ENCODE measurements at regions of chr22 and their contacts with region 1.

Region 1: GRCh38 chr22:36301384-36301828 is 48.5 kb downstream of the APOL1 start:
- DNase-seq: peak; percentile 88
- H3K4me3 ChIP-seq: no peak overlapping the region; a peak in 1 of 4 replicates
- H3K27ac ChIP-seq: peak overlapping the region in 1 of 2 experiments; percentile 4; a peak in 1 of 4 replicates
- H3K4me1 ChIP-seq: no peaks in the 10 kb centered on the region
- H3K27me3 ChIP-seq: no peaks in the 10 kb centered on the region
- CTCF ChIP-seq: peak; percentile 95
- EP300 ChIP-seq: no peak
- RAD21 ChIP-seq: peak; percentile 92

Region 2: DNA sequence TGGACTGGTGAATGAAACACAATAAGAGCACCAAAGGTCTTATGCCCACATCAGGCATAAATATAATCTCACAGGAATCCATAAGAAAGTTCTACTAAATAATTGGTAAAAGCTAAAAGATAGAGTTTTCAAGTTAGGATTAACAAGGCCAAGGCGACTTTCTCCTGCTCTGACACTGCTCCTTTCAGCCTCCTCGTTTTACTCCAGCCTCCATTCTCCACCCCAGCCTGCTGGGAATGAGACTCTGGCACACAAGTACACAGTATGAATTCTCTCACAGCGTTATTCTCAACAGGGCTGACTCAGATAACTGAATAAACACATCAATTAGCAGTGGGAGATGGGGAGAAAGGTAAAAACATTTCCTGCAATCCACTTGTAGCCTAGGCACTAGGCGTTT is 488.8 kb before region 1 on chr22:
- CTCF ChIA-PET with region 1: no interaction called
- POLR2A ChIA-PET with region 1: no interaction called
- DNase-seq: no peak
- H3K4me3 ChIP-seq: no peak overlapping the region
- H3K27ac ChIP-seq: no peak overlapping the region; a peak in 1 of 4 replicates
- H3K4me1 ChIP-seq: peaks cover 0 to 11% of the 10 kb centered on the region in 2 experiments; a peak in 2 of 4 replicates
- H3K27me3 ChIP-seq: no peaks in the 10 kb centered on the region
- CTCF ChIP-seq: no peak
- EP300 ChIP-seq: no peak
- RAD21 ChIP-seq: no peak

Region 3: DNA sequence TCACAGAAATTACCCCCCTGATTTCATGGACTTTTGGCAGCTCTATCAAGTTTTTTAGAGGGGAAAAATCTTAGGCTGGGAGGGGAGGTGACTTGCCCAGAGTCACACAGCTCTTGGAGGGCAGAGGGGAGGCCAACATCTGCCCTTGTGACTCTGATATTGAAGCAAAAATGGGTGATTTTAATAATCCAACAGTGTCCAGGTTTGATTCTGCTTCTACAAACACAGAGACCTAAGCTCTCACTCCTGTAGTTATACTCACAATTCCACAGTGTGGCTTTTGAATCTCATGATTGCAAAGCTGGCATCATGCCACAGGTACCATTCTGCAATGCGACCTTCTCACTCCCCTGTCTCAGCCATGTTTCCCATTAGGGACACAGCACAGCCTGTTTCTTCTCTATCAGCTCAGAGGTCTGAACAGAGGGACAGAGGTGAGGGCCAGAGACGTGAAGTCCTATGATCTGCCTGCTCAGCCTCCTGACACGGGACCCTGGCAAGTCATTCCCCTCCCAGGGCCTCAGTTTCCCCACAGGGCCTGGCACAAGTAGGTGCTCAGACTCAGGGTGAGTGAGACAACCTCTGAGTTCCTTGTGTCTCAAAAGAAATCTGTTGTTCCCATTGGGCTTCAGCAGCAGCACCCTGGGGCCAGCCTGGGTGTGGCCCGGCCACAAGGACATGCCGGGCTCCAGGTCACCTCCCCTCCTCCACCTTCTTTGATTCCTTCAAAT is 62.9 kb before region 1 on chr22:
- CTCF ChIA-PET with region 1: no interaction called
- POLR2A ChIA-PET with region 1: no interaction called
- DNase-seq: peak; percentile 36
- H3K4me3 ChIP-seq: peak overlapping the region; percentile 61 to 79
- H3K27ac ChIP-seq: peak overlapping the region; percentile 79 to 91
- H3K4me1 ChIP-seq: peaks cover 10 to 25% of the 10 kb centered on the region in 2 experiments; a peak in 1 of 4 replicates
- H3K27me3 ChIP-seq: no peaks in the 10 kb centered on the region
- CTCF ChIP-seq: no peak
- EP300 ChIP-seq: no peak
- RAD21 ChIP-seq: no peak

Region 4: GRCh38 chr22:36277482-36278291 is 23.7 kb before region 1 on chr22:
- CTCF ChIA-PET with region 1: interaction called, 113 read pairs
- POLR2A ChIA-PET with region 1: no interaction called
- DNase-seq: peak; percentile 84
- H3K4me3 ChIP-seq: no peak overlapping the region
- H3K27ac ChIP-seq: no peak overlapping the region
- H3K4me1 ChIP-seq: no peaks in the 10 kb centered on the region; a peak in 1 of 4 replicates
- H3K27me3 ChIP-seq: no peaks in the 10 kb centered on the region
- CTCF ChIP-seq: peak; percentile 70
- EP300 ChIP-seq: no peak
- RAD21 ChIP-seq: peak; percentile 74

Region 5: GRCh38 chr22:36311386-36312358 is 10.3 kb after region 1 on chr22:
- CTCF ChIA-PET with region 1: interaction called, 48 read pairs
- POLR2A ChIA-PET with region 1: no interaction called
- DNase-seq: no peak
- H3K4me3 ChIP-seq: no peak overlapping the region
- H3K27ac ChIP-seq: peak overlapping the region in 1 of 2 experiments; percentile 33; a peak in 1 of 4 replicates
- H3K4me1 ChIP-seq: no peaks in the 10 kb centered on the region
- H3K27me3 ChIP-seq: no peaks in the 10 kb centered on the region
- CTCF ChIP-seq: no peak
- EP300 ChIP-seq: no peak
- RAD21 ChIP-seq: no peak

Region 6: GRCh38 chr22:36331306-36331911 is 30.0 kb after region 1 on chr22:
- CTCF ChIA-PET with region 1: interaction called, 34 read pairs
- POLR2A ChIA-PET with region 1: no interaction called
- DNase-seq: peak; percentile 57
- H3K4me3 ChIP-seq: no peak overlapping the region
- H3K27ac ChIP-seq: peak overlapping the region; percentile 88 to 98
- H3K4me1 ChIP-seq: peaks cover 69 to 96% of the 10 kb centered on the region in 2 experiments
- H3K27me3 ChIP-seq: no peaks in the 10 kb centered on the region
- CTCF ChIP-seq: peak; percentile 34
- EP300 ChIP-seq: peak in 1 of 2 experiments; percentile 86; a peak in 2 of 4 replicates
- RAD21 ChIP-seq: no peak

Region 7: DNA sequence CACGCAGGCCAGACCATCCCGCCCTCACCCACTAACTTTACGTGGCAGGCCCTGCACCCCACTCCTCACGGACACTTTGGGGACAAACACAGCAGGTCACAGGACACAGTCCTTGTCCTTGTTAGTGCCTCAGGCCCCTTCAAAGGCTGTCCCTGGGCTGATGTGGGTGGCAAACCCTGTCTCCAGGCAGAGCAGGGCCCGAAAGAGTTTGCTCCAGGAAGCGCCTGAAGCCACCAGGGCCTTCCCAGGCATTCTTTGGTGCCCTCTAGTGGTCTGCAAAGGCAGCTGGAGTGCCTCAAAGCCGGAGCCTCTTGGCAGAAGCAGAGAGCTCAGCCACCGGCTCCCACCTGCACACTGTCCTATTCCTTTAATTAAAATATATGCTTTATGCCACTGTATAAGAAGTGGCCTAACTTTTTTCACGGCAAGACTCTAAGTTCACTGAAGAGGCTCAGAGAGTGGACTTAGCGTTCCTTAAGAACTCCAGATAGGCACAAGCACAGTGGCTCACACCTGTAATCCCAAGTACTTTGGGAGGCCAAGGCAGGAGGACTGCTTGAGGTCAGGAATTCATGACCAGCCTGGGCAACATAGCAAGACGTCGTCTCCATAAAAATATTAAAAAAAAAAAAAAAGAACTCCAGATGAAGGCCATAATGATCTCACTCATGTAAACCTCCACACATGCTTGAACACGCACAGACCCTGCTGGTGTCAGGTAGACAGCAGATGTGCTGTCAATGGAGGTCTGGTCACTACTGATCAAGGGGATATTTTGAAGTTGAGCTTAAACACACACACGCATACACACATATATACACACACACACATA is 169.0 kb after region 1 on chr22:
- CTCF ChIA-PET with region 1: interaction called, 329 read pairs
- POLR2A ChIA-PET with region 1: interaction called, 10 read pairs
- DNase-seq: peak; percentile 82
- H3K4me3 ChIP-seq: no peak overlapping the region
- H3K27ac ChIP-seq: peak overlapping the region in 1 of 2 experiments; percentile 100; a peak in 2 of 4 replicates
- H3K4me1 ChIP-seq: peaks cover 3 to 45% of the 10 kb centered on the region in 2 experiments; a peak in 3 of 4 replicates
- H3K27me3 ChIP-seq: no peaks in the 10 kb centered on the region
- CTCF ChIP-seq: peak; percentile 94
- EP300 ChIP-seq: no peak
- RAD21 ChIP-seq: peak; percentile 93

Region 8: GRCh38 chr22:36486619-36487384 is 185.4 kb after region 1 on chr22:
- CTCF ChIA-PET with region 1: interaction called, 12 read pairs
- POLR2A ChIA-PET with region 1: no interaction called
- DNase-seq: no peak
- H3K4me3 ChIP-seq: no peak overlapping the region
- H3K27ac ChIP-seq: no peak overlapping the region
- H3K4me1 ChIP-seq: peaks cover 3 to 5% of the 10 kb centered on the region in 2 experiments; a peak in 2 of 4 replicates
- H3K27me3 ChIP-seq: no peaks in the 10 kb centered on the region
- CTCF ChIP-seq: peak; percentile 62
- EP300 ChIP-seq: no peak
- RAD21 ChIP-seq: peak; percentile 54

Measured in SK-N-SH (cell line).